Activated B cell treated with CpG ODN at 0.5 μM for 24 hours (primary cell): ENCODE measurements at regions of chr15 and their contacts with region 1.

Region 1: GRCh38 chr15:43253431-43254403 is 13.0 kb downstream of the TGM5 start:
- DNase-seq: peak; percentile 32
- ATAC-seq: peak; percentile 85
- H3K4me3 Mint-ChIP-seq: peak overlapping the region; percentile 44
- H3K27ac Mint-ChIP-seq: peak overlapping the region; percentile 73
- H3K4me1 Mint-ChIP-seq: peaks cover 31% of the 10 kb centered on the region
- H3K27me3 Mint-ChIP-seq: no peaks in the 10 kb centered on the region
- CTCF ChIP-seq: no peak

Region 2: DNA sequence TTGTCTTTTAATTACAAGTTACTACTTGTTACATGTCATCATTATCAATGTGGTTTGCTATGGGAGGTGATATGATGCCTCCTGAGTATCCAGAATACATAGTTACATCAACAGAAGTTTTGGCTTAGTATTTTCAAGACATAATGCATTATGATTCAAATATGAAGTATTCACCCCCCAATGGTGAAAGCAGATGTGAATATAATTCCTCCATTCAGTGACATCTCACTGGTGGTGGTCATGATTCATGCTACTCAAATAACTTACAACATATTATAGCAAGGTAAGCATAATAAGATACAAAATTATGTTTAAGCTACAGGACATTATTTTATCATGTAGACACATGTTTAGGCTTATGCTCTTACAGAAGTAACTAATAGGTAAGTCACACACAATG is 298.2 kb before region 1 on chr15:
- CTCF ChIA-PET with region 1: no interaction called
- POLR2A ChIA-PET with region 1: no interaction called
- intact Hi-C with region 1: no loop called
- DNase-seq: no peak
- ATAC-seq: no peak
- H3K4me3 Mint-ChIP-seq: no peak overlapping the region
- H3K27ac Mint-ChIP-seq: no peak overlapping the region
- H3K4me1 Mint-ChIP-seq: no peaks in the 10 kb centered on the region
- H3K27me3 Mint-ChIP-seq: no peaks in the 10 kb centered on the region
- CTCF ChIP-seq: no peak

Region 3: GRCh38 chr15:43270676-43271306 is 17.1 kb after region 1 on chr15:
- CTCF ChIA-PET with region 1: no interaction called
- POLR2A ChIA-PET with region 1: no interaction called
- intact Hi-C with region 1: loop called (anchors 1 kb)
- DNase-seq: no peak
- ATAC-seq: peak; percentile 95
- H3K4me3 Mint-ChIP-seq: peak overlapping the region; percentile 54
- H3K27ac Mint-ChIP-seq: peak overlapping the region; percentile 91
- H3K4me1 Mint-ChIP-seq: peaks cover 33% of the 10 kb centered on the region
- H3K27me3 Mint-ChIP-seq: no peaks in the 10 kb centered on the region
- CTCF ChIP-seq: no peak